ENCODE measurements at regions of chr9 and their contacts with region 1.

Region 1: DNA sequence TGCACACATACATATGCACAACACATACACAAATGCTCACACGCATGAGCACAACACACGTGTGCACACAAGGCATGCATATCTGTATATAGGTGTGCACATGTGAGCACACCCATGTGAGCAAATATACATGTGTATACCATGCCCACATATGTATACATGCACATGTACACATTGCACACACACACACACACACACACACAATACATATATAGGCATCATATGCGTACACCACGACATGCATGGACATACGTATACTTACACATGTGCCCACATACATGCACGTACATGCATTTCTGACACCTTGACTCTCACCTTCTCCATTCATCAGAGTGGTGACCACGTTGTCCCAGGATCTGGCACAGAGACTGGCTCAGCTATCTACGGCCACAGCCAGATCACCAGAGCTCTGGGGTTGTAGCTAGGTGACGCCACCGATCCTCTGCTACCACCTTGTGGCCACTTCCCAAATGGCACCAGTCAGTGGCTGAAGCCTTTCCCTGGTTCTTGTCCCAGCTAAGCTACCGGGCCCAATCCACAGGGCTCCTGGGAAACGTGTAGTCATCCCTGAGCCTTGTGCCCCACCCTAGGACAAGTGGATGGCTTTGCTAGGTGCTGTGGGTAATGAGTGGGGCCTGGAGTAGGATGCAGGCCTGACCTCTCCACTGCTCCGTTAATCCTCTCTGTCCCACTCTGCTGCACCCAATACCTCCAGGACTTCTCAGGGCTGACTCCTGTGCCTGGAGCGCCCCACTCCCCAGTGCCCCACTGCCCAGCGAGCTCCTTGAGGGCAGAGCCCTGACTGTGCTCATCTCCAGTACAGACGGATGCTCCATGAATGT is 194.4 kb downstream of the RGS3 start:
- DNase-seq: peak; percentile 69
- ATAC-seq: peak; percentile 93
- H3K4me3 ChIP-seq: no peak overlapping the region
- H3K27ac ChIP-seq: no peak overlapping the region
- H3K4me1 ChIP-seq: no peaks in the 10 kb centered on the region
- H3K27me3 ChIP-seq: no peaks in the 10 kb centered on the region
- CTCF ChIP-seq: peak; percentile 90

Region 2: GRCh38 chr9:113446323-113446740 is 211.6 kb before region 1 on chr9:
- CTCF ChIA-PET with region 1: interaction called, 10 read pairs
- POLR2A ChIA-PET with region 1: no interaction called
- in situ Hi-C with region 1: no loop called
- intact Hi-C with region 1: loop called (anchors 5 kb)
- DNase-seq: peak; percentile 25
- ATAC-seq: peak; percentile 51; the same call in 1 of the 2 replicates
- H3K4me3 ChIP-seq: no peak overlapping the region
- H3K27ac ChIP-seq: no peak overlapping the region
- H3K4me1 ChIP-seq: no peaks in the 10 kb centered on the region
- H3K27me3 ChIP-seq: no peaks in the 10 kb centered on the region
- CTCF ChIP-seq: peak; percentile 52; the same call in 1 of the 2 replicates

Region 3: DNA sequence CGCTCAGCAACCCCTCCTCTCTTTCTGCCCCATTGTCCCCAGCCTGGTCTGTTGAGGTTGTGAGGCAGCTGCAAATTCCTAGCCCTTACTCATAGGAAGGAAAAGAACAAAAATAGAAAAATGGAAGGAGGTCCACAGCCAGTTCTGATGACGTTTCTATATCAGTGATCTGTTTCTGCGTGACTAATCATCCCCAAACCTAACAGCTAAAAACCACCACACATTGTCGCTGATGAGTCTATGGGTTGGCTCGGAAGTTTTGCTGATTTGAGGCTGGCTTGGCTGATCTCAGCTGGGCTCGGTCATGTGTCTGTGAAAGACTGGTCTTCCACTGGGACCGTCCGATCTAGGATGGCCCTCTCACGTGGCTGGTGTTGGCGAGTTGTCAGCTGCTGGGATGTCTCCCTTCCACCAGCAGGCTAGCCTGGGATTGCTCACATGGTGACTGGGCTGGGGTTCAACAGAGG is 17.6 kb after region 1 on chr9:
- CTCF ChIA-PET with region 1: no interaction called
- POLR2A ChIA-PET with region 1: no interaction called
- in situ Hi-C with region 1: no loop called
- intact Hi-C with region 1: no loop called
- DNase-seq: no peak
- ATAC-seq: no peak
- H3K4me3 ChIP-seq: no peak overlapping the region
- H3K27ac ChIP-seq: no peak overlapping the region
- H3K4me1 ChIP-seq: no peaks in the 10 kb centered on the region
- H3K27me3 ChIP-seq: peaks cover 5% of the 10 kb centered on the region
- CTCF ChIP-seq: no peak

Region 4: DNA sequence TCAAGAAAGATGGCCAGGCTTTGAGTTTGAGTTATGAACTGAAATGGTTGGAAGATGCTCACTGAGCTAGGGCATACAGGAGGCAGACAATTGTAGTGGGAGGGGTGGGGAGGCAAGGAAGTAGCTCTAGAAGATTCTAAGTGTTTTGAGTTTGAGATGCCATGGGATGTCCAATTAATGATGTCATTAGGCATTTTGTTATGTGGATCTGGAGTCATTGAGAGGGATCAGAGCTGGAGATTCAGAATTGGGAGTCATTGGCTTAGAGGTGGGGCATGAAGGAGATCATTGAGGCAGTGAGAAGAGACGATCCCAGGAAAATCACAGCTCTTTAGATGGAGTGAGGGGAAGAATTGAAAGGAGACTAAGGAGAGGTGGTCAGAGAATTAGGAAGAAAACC is 106.7 kb after region 1 on chr9:
- CTCF ChIA-PET with region 1: no interaction called
- POLR2A ChIA-PET with region 1: no interaction called
- in situ Hi-C with region 1: no loop called
- intact Hi-C with region 1: no loop called
- DNase-seq: no peak
- ATAC-seq: no peak
- H3K4me3 ChIP-seq: no peak overlapping the region
- H3K27ac ChIP-seq: no peak overlapping the region
- H3K4me1 ChIP-seq: no peaks in the 10 kb centered on the region
- H3K27me3 ChIP-seq: no peaks in the 10 kb centered on the region
- CTCF ChIP-seq: no peak

Measured in Panc1 (cell line).